Natural killer cell (primary cell): ENCODE measurements at regions of chr15 and their contacts with region 1.

Region 1: DNA sequence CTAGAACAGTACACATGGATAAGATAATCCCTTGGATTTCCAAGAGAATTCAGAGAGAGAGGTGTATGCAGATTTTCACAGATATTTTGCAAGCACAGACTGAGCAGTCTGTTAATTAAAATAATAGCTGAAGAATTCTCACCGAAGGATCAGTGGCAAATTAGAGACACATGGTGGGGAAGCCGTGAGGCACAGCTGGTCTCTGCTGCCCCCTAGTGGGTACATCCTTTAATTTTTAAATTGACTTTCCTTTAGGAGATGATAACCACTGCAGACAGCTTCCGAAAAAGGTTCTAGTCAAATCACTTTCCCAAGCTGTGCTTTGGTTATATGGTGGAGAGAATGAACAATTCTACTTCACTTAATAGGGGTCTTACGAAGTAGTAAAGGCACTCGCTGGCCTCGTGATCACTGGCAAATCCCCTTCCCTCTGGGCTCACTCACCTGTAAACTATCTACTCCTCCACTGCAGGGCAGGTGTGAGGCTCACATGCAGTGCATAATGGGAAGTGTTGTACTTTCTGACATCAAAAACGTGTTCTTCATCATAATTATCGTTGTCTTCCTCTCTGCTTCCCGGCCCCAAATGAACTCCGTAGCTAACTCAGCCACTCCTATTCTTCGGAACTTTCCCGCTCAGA is 19.5 kb downstream of the MESD start:
- DNase-seq: peak; percentile 46 to 83
- ATAC-seq: peak; percentile 61 to 81 (median 76)
- H3K4me3 ChIP-seq: no peak overlapping the region
- H3K4me3 Mint-ChIP-seq: no peak overlapping the region
- H3K27ac ChIP-seq: no peak overlapping the region
- H3K27ac Mint-ChIP-seq: no peak overlapping the region
- H3K4me1 ChIP-seq: peaks cover 3% of the 10 kb centered on the region
- H3K4me1 Mint-ChIP-seq: peaks cover 25% of the 10 kb centered on the region in 2 donors
- H3K27me3 ChIP-seq: no peaks in the 10 kb centered on the region
- H3K27me3 Mint-ChIP-seq: no peaks in the 10 kb centered on the region
- CTCF ChIP-seq: peak; percentile 94

Region 2: DNA sequence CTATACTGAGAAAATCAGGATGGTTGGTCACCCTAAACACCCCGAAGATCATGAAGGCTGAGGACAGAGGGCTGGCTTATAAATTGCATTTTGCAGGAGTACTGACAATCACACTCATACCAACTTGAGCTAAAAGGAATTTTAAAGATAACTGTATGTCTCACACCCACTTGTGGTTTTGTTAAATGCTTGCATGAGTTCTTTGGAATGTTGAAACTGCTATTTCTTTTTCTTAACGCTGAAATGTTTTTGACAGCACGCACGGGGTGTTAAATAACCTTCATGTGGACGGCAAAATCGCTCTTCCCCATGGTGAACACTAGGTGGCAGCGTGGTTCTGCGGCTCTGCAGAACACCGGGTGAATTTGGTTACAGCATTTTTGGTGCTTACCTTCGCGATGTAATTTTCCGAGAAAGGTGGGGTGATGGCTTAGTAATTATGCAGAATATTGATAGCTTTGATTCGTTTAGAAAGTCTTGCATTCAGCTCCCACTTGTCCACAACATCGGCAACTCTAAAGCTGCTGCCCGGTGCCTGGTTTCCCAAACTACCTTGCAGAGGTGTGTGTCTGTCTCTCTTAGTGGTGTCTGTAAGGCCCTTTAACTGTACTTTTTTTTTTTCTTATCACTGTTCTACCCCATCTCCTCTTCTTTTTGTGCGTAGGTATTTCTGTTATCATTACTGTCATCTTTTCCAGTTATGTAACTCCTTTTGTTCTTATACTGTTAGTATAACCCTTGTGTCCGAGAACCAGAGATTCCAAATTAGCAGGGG is 514.3 kb before region 1 on chr15:
- intact Hi-C with region 1: loop called (anchors 1 kb)
- DNase-seq: peak; percentile 30 to 83
- ATAC-seq: peak; percentile 60 to 87 (median 74)
- H3K4me3 ChIP-seq: no peak overlapping the region
- H3K4me3 Mint-ChIP-seq: no peak overlapping the region
- H3K27ac ChIP-seq: no peak overlapping the region
- H3K27ac Mint-ChIP-seq: no peak overlapping the region
- H3K4me1 ChIP-seq: no peaks in the 10 kb centered on the region
- H3K4me1 Mint-ChIP-seq: peaks cover 0 to 6% of the 10 kb centered on the region in 2 donors
- H3K27me3 ChIP-seq: no peaks in the 10 kb centered on the region
- H3K27me3 Mint-ChIP-seq: peaks cover 14 to 25% of the 10 kb centered on the region in 2 donors
- CTCF ChIP-seq: peak; percentile 87

Region 3: DNA sequence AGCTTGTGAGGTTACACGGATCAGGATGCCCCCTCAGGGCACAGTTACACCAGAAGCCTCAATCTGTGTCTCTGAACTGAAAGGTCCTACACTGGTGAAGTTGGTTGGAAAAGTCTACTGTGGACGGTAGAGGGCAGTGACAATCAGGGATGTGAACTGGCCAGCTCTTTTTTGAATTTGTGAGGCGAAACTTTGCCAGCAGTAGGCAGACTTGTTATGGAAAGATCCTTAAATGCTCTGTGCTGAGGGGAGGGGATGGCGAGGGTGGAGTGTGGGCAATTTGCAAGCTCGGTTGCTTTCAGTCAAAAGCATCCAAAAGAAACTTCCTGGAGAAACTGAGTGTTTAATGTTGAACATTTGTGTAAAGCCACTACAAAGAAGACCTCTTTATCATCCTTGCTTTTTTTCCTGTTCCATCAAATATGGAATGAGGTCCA is 402.4 kb before region 1 on chr15:
- intact Hi-C with region 1: loop called (anchors 2 kb)
- DNase-seq: peak in 1 of 2 donors; percentile 52
- ATAC-seq: peak in 2 of 3 donors; percentile 36 to 55
- H3K4me3 ChIP-seq: no peak overlapping the region
- H3K4me3 Mint-ChIP-seq: no peak overlapping the region
- H3K27ac ChIP-seq: no peak overlapping the region
- H3K27ac Mint-ChIP-seq: no peak overlapping the region
- H3K4me1 ChIP-seq: no peaks in the 10 kb centered on the region
- H3K4me1 Mint-ChIP-seq: peaks cover 7 to 14% of the 10 kb centered on the region in 2 donors
- H3K27me3 ChIP-seq: no peaks in the 10 kb centered on the region
- H3K27me3 Mint-ChIP-seq: peaks cover 27 to 51% of the 10 kb centered on the region in 2 donors
- CTCF ChIP-seq: no peak